ENCODE measurements at regions of chr5 and their contacts with region 1.

Region 1: DNA sequence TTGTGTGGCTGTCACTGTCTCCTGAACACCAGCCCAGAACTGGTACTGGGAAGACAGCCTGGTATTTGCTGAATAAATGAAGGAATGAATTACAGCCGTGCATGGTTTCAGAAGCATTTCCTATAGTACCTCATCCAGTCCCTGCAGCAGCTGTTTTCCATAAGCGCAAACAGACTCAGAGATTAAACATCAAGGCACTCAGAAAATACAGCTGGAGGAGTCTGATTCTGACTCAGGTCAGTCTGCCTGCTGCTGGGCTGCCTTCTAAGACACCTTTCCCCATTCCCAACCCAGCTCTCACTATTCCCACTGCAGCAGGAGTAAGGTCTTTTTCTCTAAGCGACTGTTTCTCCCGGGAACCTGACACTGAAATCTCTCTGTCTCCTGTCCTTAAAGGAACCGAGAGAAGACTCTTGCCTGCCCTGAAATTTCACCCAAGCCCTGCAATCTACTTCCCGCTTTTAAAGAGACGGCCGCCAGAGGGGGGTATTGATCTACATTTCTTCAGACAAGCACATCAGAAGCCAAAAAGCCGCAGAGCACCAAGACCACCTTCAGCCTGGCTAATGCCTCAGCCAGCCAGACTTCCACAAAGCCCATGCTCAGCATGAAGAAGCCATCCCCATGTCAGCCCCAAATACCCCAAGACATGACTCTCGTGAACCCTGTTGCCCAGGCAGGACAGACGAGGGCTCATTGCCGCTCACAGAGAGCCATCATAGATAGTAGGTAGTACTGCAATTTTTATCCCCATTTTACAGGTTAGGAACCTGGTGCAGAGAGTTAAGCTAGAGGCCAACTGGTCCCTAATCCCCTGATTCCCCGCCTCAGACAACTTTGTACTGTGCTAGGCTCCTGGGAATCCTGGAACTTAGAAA is 5.4 kb upstream of the FOXI1 start:
- DNase-seq: peak; percentile 83
- H3K4me3 Mint-ChIP-seq: no peak overlapping the region
- H3K27ac Mint-ChIP-seq: no peak overlapping the region
- H3K4me1 Mint-ChIP-seq: peaks cover 5% of the 10 kb centered on the region
- H3K27me3 Mint-ChIP-seq: peaks cover 59% of the 10 kb centered on the region
- CTCF ChIP-seq: peak; percentile 80

Region 2: GRCh38 chr5:170076211-170076610 is 24.1 kb before region 1 on chr5:
- CTCF ChIA-PET with region 1: no interaction called
- intact Hi-C with region 1: no loop called
- DNase-seq: no peak
- H3K4me3 Mint-ChIP-seq: no peak overlapping the region
- H3K27ac Mint-ChIP-seq: no peak overlapping the region
- H3K4me1 Mint-ChIP-seq: no peaks in the 10 kb centered on the region
- H3K27me3 Mint-ChIP-seq: peaks cover 73% of the 10 kb centered on the region
- CTCF ChIP-seq: no peak

Region 3: DNA sequence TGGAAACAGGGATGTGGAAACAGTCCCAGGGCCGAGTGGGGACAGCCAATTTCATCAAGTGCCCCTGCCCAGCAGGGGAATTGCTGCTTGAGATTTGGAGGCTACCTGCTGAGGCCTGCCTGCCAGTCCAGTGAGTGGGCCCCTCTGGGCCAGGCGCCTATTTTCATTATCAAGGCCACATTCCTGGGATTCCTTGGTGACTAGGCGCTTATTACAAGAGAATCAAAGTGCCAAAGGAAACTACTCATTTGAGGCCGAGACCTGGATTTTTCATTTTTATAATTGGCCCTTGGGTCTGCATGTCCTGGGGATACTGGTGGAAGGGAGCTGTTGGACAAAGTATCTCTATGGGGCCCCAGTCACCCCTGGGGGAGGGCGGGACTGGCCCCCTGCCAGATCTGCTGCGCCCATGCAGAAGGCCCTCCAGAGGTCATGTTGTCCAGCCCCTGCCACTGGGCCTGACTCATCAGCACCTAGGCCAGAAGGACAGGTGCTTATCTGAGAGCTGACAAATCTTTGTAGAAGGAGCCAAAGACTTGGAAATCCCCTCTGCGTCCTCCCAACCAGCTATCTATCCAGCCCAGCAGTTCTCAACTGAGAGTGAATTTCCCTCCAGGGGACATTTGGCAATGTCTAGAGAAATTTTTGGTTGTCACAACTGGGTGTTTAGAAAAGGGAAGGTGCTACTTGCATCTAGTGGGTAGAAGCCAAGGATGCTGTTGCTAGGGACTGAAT is 51.0 kb after region 1 on chr5:
- CTCF ChIA-PET with region 1: no interaction called
- intact Hi-C with region 1: loop called (anchors 2 kb)
- DNase-seq: peak; percentile 90
- H3K4me3 Mint-ChIP-seq: no peak overlapping the region
- H3K27ac Mint-ChIP-seq: peak overlapping the region; percentile 37
- H3K4me1 Mint-ChIP-seq: peaks cover 51% of the 10 kb centered on the region
- H3K27me3 Mint-ChIP-seq: no peaks in the 10 kb centered on the region
- CTCF ChIP-seq: no peak

Region 4: DNA sequence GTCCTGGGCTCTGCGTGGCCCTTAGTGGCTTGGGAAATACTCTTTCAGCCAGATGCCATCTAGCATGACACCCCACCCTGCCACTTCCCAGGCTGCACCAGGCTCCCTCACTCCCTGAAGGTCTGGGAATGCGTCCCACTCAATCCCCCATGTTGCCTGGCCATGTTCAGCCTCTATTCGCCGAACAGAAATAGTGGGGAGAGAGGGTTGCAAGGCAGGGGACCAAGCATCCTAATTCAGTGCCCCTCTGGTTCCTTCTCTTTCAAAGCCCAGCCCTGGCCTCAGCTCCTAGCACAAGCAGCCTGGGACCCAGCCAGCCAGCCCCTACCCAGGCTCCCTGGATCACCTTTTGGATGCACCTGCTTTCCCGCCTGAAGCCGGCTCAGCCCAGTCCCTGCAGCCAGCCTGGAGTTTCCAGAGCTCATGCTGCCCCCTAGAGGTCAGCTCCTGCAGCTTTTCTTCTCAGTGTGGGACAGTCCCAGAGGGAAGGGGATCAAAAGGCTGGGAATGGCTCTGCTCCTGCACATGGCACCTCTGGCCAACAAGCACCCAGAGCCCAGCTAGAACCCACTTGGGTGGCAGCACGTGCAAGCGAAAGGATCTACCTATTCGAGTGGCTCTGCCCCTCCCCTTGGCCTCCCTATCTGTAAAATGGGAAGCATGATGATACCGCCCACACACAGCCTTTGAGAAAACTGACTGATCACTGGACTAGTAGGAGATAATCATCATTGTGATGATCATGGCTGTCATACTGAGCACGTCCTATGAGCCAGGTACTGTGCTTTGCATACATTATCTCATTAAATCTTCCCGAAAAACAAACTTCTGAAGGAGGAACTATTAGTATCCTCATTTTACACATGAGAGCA is 83.7 kb after region 1 on chr5:
- CTCF ChIA-PET with region 1: interaction called, 26 read pairs
- intact Hi-C with region 1: loop called (anchors 1 kb)
- DNase-seq: peak; percentile 90
- H3K4me3 Mint-ChIP-seq: no peak overlapping the region
- H3K27ac Mint-ChIP-seq: no peak overlapping the region
- H3K4me1 Mint-ChIP-seq: no peaks in the 10 kb centered on the region
- H3K27me3 Mint-ChIP-seq: peaks cover 48% of the 10 kb centered on the region
- CTCF ChIP-seq: peak; percentile 93

Region 5: DNA sequence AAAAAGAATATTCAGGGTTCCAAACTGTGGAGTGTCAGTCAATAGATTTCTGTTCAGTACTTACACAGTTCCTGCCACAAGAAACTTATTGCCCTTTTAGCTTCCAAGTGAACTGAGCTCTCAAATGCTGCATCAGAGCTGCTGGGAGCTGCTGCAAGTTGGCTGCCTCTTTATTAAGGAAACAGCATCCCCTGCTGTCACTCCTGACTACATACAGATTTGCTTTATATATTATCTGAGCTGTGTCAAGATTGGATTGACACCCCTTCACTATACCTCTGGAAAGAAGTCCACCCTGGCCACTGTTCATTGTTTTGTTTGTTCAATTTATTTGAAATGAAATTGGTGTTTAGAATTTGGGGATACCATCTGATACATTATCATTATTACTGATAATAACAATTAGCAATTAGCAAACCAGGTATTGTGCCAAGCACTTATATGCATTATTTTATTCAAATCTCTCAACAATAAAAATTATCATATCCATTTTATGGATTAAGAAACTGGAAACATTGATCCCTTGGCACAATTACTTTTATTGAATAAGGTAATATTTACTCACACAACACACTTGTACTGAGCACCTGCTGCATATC is 116.1 kb after region 1 on chr5:
- CTCF ChIA-PET with region 1: interaction called, 15 read pairs
- intact Hi-C with region 1: loop called (anchors 1 kb)
- DNase-seq: peak; percentile 67
- H3K4me3 Mint-ChIP-seq: no peak overlapping the region
- H3K27ac Mint-ChIP-seq: no peak overlapping the region
- H3K4me1 Mint-ChIP-seq: no peaks in the 10 kb centered on the region
- H3K27me3 Mint-ChIP-seq: no peaks in the 10 kb centered on the region
- CTCF ChIP-seq: peak; percentile 77

Region 6: DNA sequence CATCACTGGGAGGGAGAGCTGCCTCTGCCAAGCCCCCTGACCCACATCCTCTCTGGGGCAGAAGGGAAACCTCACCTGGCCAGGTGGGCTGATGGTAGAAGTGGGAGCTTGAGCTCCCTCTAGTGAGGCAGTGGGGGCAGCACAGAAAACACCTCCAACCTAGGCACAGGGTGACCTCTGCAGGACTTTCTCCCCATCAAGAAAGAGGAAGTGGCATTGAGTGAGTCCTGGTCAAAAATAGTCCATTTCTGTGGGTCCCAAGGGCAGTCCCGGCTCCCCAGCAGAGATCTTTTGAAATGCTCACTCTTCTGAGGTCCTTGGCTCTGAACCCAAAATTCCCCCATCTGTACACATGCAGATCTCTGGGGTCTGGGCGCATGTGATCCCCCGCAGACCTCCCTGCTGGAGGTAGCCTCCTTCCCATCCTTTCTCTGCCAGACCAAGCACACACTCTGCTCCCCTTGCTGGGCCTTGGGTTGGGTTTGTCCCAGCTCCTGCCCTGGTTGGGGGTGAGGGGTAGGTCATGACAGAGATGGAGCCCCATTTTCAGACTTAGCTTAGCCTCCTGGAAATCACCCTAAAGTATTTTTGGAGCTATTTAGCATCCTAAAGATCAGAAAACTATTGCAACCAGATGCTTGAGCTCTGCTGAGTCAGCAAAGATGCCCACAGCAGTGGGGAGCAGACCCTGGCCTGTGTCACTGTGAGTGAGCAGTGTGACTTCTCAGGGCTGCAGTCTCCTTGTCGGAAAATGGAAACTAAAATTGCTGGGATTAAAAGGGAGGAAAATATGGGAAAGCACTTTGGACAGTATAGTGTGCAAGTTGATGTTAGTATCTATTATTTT is 238.9 kb after region 1 on chr5:
- CTCF ChIA-PET with region 1: no interaction called
- intact Hi-C with region 1: no loop called
- DNase-seq: peak; percentile 44
- H3K4me3 Mint-ChIP-seq: no peak overlapping the region
- H3K27ac Mint-ChIP-seq: no peak overlapping the region
- H3K4me1 Mint-ChIP-seq: no peaks in the 10 kb centered on the region
- H3K27me3 Mint-ChIP-seq: peaks cover 60% of the 10 kb centered on the region
- CTCF ChIP-seq: peak; percentile 73

Measured in Calu3 (cell line).